GM12878 (cell line): ENCODE measurements at regions of chr10 and their contacts with region 1.

Region 1: GRCh38 chr10:107492389-107492788 is 327.9 kb upstream of the SORCS1 start:
- DNase-seq: no peak
- ATAC-seq: no peak
- H3K4me3 ChIP-seq: no peak overlapping the region
- H3K27ac ChIP-seq: no peak overlapping the region
- H3K4me1 ChIP-seq: no peaks in the 10 kb centered on the region
- H3K27me3 ChIP-seq: no peaks in the 10 kb centered on the region
- CTCF ChIP-seq: no peak
- EP300 ChIP-seq: no peak
- POLR2A ChIP-seq: no peak
- RAD21 ChIP-seq: no peak

Region 2: DNA sequence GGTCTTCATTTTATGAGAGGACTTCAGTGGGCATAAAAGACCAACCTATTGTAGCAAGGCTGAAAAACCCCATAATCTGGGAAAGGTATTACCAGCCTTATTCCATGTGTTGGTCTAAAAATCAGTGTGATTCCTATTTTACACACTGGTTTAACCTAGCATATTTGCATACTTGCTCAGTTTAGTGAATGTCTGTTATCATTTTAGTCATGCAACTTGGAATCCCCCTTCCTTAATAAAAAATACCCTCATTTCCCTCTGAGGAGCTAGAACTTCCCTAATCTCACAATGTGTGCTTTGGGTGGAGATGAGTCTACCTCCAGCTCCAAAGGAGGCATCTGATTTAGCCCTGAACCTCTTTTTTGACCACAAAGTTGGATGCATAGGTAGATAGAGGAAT is 15.1 kb before region 1 on chr10:
- CTCF ChIA-PET with region 1: interaction called, 5 read pairs
- POLR2A ChIA-PET with region 1: no interaction called
- RAD21 ChIA-PET with region 1: interaction called, 7 read pairs
- SMC1A ChIA-PET with region 1: interaction called, 23 read pairs
- in situ Hi-C with region 1: no loop called
- intact Hi-C with region 1: no loop called
- DNase-seq: peak; percentile 45
- ATAC-seq: peak; percentile 82
- H3K4me3 ChIP-seq: peak overlapping the region; percentile 39; the same call in 1 of the 2 replicates
- H3K27ac ChIP-seq: peak overlapping the region; percentile 1; the same call in 1 of the 2 replicates
- H3K4me1 ChIP-seq: peaks cover 7% of the 10 kb centered on the region
- H3K27me3 ChIP-seq: no peaks in the 10 kb centered on the region
- CTCF ChIP-seq: no peak
- EP300 ChIP-seq: peak in 1 of 2 experiments; percentile 51; a peak in 1 of 4 replicates
- POLR2A ChIP-seq: no peak
- RAD21 ChIP-seq: no peak